ENCODE measurements at regions of chr14 and their contacts with region 1.

Region 1: GRCh38 chr14:92585981-92586937 is 72.7 kb downstream of the RIN3 start:
- DNase-seq: peak; percentile 59
- H3K4me3 Mint-ChIP-seq: peak overlapping the region; percentile 2
- H3K27ac Mint-ChIP-seq: peak overlapping the region; percentile 65
- H3K4me1 Mint-ChIP-seq: peaks cover 82% of the 10 kb centered on the region
- H3K27me3 Mint-ChIP-seq: no peaks in the 10 kb centered on the region

Region 2: GRCh38 chr14:92340931-92341330 is 245.3 kb before region 1 on chr14:
- CTCF ChIA-PET with region 1: no interaction called
- intact Hi-C with region 1: loop called (anchors 1 kb)
- DNase-seq: peak; percentile 26
- H3K4me3 Mint-ChIP-seq: no peak overlapping the region
- H3K27ac Mint-ChIP-seq: no peak overlapping the region
- H3K4me1 Mint-ChIP-seq: peaks cover 18% of the 10 kb centered on the region
- H3K27me3 Mint-ChIP-seq: peaks cover 12% of the 10 kb centered on the region

Region 3: GRCh38 chr14:92531106-92531873 is 55.0 kb before region 1 on chr14:
- CTCF ChIA-PET with region 1: no interaction called
- intact Hi-C with region 1: loop called (anchors 1 kb)
- DNase-seq: peak; percentile 62
- H3K4me3 Mint-ChIP-seq: peak overlapping the region; percentile 25
- H3K27ac Mint-ChIP-seq: peak overlapping the region; percentile 85
- H3K4me1 Mint-ChIP-seq: peaks cover 68% of the 10 kb centered on the region
- H3K27me3 Mint-ChIP-seq: peaks cover 3% of the 10 kb centered on the region

Region 4: DNA sequence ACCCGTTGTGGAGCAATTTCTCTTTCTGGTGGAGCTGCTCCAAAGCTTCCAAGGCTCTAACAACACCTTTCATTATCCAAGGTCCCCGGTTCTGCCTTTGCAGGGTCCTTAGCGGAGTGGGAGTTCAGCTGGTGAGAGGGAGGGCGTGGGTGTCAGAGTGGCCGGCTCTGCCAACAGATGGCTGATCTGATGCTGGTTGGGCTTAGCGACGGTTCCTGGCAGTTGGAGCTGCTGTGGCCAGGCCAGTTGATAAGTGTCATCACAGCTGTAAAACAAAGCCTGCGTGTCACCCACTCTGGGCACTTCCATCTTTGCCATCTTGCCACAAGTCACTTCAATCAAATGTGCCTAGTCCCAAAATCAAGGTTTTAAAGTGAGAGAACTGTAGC is 36.4 kb before region 1 on chr14:
- CTCF ChIA-PET with region 1: interaction called, 4 read pairs
- intact Hi-C with region 1: loop called (anchors 5 kb)
- DNase-seq: no peak
- H3K4me3 Mint-ChIP-seq: no peak overlapping the region
- H3K27ac Mint-ChIP-seq: no peak overlapping the region
- H3K4me1 Mint-ChIP-seq: peaks cover 14% of the 10 kb centered on the region
- H3K27me3 Mint-ChIP-seq: no peaks in the 10 kb centered on the region

Region 5: DNA sequence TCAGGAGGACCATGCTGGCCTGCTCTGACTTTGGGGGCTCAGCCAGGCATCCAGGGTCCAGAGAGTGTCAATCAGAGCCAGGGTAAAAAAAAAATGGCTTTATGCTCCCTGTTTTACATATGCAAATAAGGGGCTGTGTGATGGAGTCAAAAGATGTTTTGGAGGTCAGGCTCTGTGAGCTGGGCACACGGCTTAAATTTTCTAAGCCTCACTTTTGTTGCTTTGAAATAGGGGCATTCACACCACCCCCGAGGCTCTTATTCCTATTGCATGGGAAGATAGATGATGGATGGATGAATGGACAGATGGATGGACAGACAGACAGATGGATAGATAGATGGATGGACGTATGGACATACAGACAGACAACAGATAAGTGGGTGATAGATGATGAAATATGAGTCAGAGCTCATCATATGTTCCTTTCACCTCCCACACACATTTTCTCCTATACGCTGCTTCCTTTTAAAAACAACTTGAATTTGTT is 30.0 kb before region 1 on chr14:
- CTCF ChIA-PET with region 1: interaction called, 7 read pairs
- intact Hi-C with region 1: loop called (anchors 1 kb)
- DNase-seq: peak; percentile 27
- H3K4me3 Mint-ChIP-seq: no peak overlapping the region
- H3K27ac Mint-ChIP-seq: no peak overlapping the region
- H3K4me1 Mint-ChIP-seq: peaks cover 60% of the 10 kb centered on the region
- H3K27me3 Mint-ChIP-seq: no peaks in the 10 kb centered on the region

Region 6: DNA sequence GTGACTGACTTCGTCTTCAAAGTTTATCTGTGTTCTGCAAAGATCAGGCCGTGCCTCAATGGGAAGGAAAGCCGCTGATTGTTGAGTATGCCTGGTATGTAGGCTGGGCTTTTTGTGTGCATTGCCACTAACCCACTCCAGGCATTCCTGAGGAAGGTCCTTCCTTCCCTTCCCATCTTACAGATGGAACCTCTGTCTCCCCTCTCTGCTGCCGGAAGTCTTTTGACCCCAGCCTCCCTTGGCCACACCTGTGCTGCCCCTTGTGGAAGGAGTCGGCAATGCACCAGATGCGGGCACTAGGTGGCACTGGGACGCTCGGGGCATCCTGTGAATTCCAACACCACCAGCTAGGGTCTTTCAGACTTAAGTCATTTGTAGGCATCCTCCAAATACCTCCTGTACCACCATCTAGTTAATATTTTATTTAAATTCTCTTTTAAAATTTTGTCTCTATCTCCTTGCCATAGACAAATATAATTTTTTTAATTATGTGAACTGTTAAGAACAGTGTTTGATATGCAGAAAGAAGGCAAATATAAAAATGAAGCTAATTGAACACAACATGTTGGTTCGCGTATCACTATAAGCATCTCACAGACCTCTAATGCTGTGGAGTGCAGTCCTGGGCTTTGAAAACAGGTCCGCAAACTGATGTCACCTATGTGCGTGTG is 26.9 kb after region 1 on chr14:
- CTCF ChIA-PET with region 1: interaction called, 11 read pairs
- intact Hi-C with region 1: no loop called
- DNase-seq: peak; percentile 87
- H3K4me3 Mint-ChIP-seq: no peak overlapping the region
- H3K27ac Mint-ChIP-seq: no peak overlapping the region
- H3K4me1 Mint-ChIP-seq: peaks cover 52% of the 10 kb centered on the region
- H3K27me3 Mint-ChIP-seq: no peaks in the 10 kb centered on the region

Region 7: DNA sequence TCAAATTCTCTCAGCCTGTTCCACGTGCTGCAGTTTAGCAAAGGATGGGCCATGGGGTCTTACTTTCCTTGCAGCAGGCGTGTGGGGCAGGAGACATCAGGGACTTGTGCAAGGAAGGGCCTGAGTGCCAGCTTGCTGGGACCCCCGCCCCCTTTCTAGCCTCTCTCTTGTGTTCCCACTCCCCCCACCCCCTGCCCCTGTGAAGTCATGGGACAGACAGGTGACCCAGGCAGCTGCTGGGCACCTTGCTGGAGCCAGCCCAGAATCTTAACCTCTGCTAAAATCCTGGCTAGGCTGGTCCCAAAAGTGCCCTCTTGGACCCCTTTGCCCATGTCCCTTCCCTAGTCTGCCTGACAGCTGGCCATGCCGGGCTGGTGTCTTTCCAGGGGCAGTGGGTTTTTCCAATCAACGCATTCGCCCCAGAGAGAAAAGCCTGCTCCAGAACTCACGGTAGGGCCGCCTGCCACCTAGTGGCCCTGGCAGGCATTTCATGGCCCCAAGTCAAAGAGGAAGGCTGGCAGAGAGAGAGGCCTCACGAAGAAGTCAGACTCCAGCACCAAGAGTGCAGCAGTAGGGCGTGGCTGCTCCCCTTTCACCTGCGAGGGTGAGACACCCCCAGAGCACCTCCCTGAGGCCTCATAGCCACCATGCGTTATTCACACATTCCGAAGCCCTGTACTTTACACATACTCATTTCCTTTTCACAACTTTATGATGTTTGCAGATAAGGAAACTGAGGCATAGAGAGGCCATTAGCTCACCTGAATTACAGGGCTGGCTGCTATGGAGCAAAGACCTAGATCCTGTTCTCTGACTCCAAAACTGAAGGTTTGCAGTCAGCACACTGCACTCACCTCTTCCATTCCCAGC is 94.8 kb after region 1 on chr14:
- CTCF ChIA-PET with region 1: no interaction called
- intact Hi-C with region 1: loop called (anchors 1 kb)
- DNase-seq: peak; percentile 85
- H3K4me3 Mint-ChIP-seq: no peak overlapping the region
- H3K27ac Mint-ChIP-seq: peak overlapping the region; percentile 68
- H3K4me1 Mint-ChIP-seq: peaks cover 30% of the 10 kb centered on the region
- H3K27me3 Mint-ChIP-seq: no peaks in the 10 kb centered on the region

Measured in activated naive CD4-positive, alpha-beta T cell treated with anti-CD3 and anti-CD28 coated beads for 36 hours (primary cell).